ENCODE measurements at regions of chr20 and their contacts with region 1.

Region 1: GRCh38 chr20:5513975-5514516 is 197.3 kb upstream of the PROKR2 start:
- DNase-seq: peak; percentile 95
- ATAC-seq: peak; percentile 96
- H3K4me3 ChIP-seq: peak overlapping the region; percentile 55
- H3K27ac ChIP-seq: peak overlapping the region; percentile 63
- H3K4me1 ChIP-seq: peaks cover 14% of the 10 kb centered on the region
- H3K27me3 ChIP-seq: no peaks in the 10 kb centered on the region
- CTCF ChIP-seq: peak; percentile 17; the same call in 1 of the 2 replicates

Region 2: DNA sequence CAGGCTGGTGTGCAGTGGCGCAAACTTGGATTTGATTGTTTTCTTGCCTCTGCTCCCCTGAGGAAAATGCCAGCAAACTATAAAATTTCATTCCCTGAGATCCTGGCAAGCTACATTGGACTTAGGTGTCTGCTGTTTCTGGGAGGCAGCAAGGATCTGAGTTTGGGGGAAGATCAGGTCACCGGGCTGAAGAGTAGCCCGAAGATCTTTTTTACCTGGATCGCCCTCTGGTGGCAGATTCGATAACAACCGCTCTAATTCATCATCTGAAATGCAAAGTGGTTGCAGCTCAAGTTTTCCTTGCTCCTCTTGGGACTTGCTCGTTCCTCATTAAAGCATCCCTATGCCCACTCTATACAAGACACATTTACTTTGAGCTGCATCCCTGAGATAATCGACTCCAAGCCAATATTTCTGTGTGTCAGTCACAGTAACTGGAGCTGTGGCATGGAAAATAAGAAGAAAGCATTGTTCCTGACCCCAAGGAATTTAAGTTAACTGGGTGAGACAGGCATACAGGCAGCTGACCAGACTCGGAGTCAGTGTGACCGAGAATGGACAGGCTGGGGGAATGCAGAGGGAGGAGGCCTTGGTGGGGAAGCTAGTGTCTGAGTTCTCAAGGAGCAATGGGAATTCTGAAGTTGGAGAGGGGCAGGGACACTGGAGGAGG is 65.5 kb before region 1 on chr20:
- CTCF ChIA-PET with region 1: no interaction called
- POLR2A ChIA-PET with region 1: no interaction called
- intact Hi-C with region 1: no loop called
- DNase-seq: peak; percentile 79
- ATAC-seq: peak; percentile 40; the same call in 1 of the 2 replicates
- H3K4me3 ChIP-seq: no peak overlapping the region
- H3K27ac ChIP-seq: no peak overlapping the region
- H3K4me1 ChIP-seq: no peaks in the 10 kb centered on the region
- H3K27me3 ChIP-seq: peaks cover 44% of the 10 kb centered on the region
- CTCF ChIP-seq: peak; percentile 84

Region 3: GRCh38 chr20:5535125-5535771 is 21.2 kb after region 1 on chr20:
- CTCF ChIA-PET with region 1: no interaction called
- POLR2A ChIA-PET with region 1: no interaction called
- intact Hi-C with region 1: no loop called
- DNase-seq: no peak
- ATAC-seq: no peak
- H3K4me3 ChIP-seq: no peak overlapping the region
- H3K27ac ChIP-seq: no peak overlapping the region
- H3K4me1 ChIP-seq: no peaks in the 10 kb centered on the region
- H3K27me3 ChIP-seq: no peaks in the 10 kb centered on the region
- CTCF ChIP-seq: no peak

Region 4: GRCh38 chr20:5729348-5729747 is 215.3 kb after region 1 on chr20:
- CTCF ChIA-PET with region 1: no interaction called
- POLR2A ChIA-PET with region 1: interaction called, 25 read pairs
- intact Hi-C with region 1: no loop called
- DNase-seq: peak; percentile 50
- ATAC-seq: peak; percentile 59
- H3K4me3 ChIP-seq: no peak overlapping the region
- H3K27ac ChIP-seq: peak overlapping the region; percentile 28
- H3K4me1 ChIP-seq: peaks cover 27% of the 10 kb centered on the region
- H3K27me3 ChIP-seq: no peaks in the 10 kb centered on the region
- CTCF ChIP-seq: no peak